Ascending aorta (tissue), 2 donors: ENCODE measurements at regions of chr4 and their contacts with region 1.

Region 1: GRCh38 chr4:40149960-40150385 is 46.9 kb upstream of the RHOH start:
- DNase-seq: peak in 1 of 2 donors; percentile 78
- H3K4me3 ChIP-seq: no peak overlapping the region
- H3K27ac ChIP-seq: no peak overlapping the region
- H3K4me1 ChIP-seq: no peaks in the 10 kb centered on the region
- H3K27me3 ChIP-seq: no peaks in the 10 kb centered on the region
- CTCF ChIP-seq: peak; percentile 65 to 75 (median 69)

Region 2: GRCh38 chr4:40212674-40213527 is 62.9 kb after region 1 on chr4:
- intact Hi-C with region 1: no loop called
- DNase-seq: no peak
- H3K4me3 ChIP-seq: no peak overlapping the region
- H3K27ac ChIP-seq: no peak overlapping the region
- H3K4me1 ChIP-seq: no peaks in the 10 kb centered on the region
- H3K27me3 ChIP-seq: no peaks in the 10 kb centered on the region
- CTCF ChIP-seq: no peak

Region 3: GRCh38 chr4:40309250-40309774 is 159.3 kb after region 1 on chr4:
- intact Hi-C with region 1: loop called (anchors 2 kb)
- DNase-seq: peak; percentile 59 to 93
- H3K4me3 ChIP-seq: peak overlapping the region in 1 of 2 donors; percentile 23
- H3K27ac ChIP-seq: no peak overlapping the region
- H3K4me1 ChIP-seq: no peaks in the 10 kb centered on the region
- H3K27me3 ChIP-seq: no peaks in the 10 kb centered on the region
- CTCF ChIP-seq: peak; percentile 58 to 87 (median 79)